ENCODE measurements at regions of chr21 and their contacts with region 1.

Region 1: GRCh38 chr21:29372063-29372802 is 73.5 kb downstream of the BACH1 start:
- DNase-seq: no peak
- ATAC-seq: peak; percentile 91

Region 2: GRCh38 chr21:29085106-29085752 is 287.0 kb before region 1 on chr21:
- intact Hi-C with region 1: loop called (anchors 5 kb)
- DNase-seq: no peak
- ATAC-seq: no peak

Region 3: DNA sequence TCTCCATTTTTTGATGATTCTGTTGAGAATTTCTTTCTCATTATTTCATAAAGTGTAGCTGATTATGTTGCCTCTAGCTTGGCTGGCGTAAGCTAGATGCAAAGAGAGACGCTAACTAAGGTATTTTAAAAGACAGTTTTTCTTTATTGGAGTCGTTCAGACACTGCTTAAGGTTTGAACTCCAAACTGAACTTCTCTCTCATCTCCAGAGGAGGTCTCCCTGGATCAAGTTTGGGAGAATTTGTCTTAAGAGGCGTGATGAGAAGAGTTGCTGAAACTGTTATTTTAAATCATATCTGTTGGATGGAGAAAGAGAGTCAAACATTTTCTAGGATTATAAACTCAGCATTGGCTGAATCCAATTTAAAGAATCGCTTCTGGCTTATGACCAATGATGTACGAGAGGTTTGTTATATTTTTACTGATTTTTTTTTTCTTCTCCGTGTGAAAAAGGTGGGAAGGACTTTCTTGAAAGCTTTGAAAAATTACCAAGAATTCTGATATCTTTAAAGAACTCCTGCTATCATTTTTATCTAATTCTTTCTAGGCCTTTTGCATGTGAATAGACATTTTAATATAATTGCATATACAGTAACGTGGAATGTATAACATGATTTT is 207.8 kb before region 1 on chr21:
- intact Hi-C with region 1: loop called (anchors 5 kb)
- DNase-seq: no peak
- ATAC-seq: peak; percentile 80

Region 4: GRCh38 chr21:29418813-29419212 is 46.6 kb after region 1 on chr21:
- intact Hi-C with region 1: no loop called
- DNase-seq: no peak
- ATAC-seq: no peak

Region 5: DNA sequence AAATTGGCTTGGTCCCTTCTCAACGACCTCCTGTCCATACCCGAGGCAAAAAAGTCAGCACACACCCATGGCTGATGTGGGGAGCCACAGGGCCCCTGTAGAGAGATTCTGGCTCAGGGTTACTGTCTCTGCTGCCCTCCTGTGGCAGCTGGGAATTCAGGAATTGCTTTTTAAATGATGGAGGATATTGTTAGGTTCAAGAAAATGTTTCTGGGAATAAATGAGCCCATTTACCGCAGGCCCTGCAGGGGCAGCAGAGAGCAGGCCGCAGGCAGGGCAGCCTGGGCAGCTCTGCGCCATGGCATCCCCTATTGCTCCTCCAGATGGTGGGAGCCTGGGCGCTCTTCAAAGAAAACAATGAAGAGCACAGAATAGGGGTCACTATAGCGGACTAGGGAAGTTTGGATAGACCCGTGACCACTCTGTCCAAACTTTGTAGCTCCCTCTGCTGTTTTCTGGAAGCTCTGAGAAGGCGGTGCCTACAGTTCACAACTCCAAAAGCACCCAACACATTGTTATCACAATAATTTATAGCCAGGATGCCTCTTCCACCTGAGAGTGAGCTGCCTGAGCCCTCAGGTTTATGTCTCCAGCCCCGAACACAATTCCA is 127.6 kb after region 1 on chr21:
- intact Hi-C with region 1: no loop called
- DNase-seq: no peak
- ATAC-seq: no peak